T-cell (primary cell): ENCODE measurements at regions of chr1 and their contacts with region 1.

Region 1: GRCh38 chr1:212388985-212389716 is 25.5 kb downstream of the PACC1 start:
- DNase-seq: no peak
- ATAC-seq: no peak
- H3K4me3 ChIP-seq: no peak overlapping the region
- H3K4me3 Mint-ChIP-seq: no peak overlapping the region
- H3K27ac ChIP-seq: no peak overlapping the region
- H3K27ac Mint-ChIP-seq: no peak overlapping the region
- H3K4me1 ChIP-seq: peaks cover 0 to 8% of the 10 kb centered on the region in 2 experiments
- H3K4me1 Mint-ChIP-seq: peaks cover 11 to 14% (median 13%) of the 10 kb centered on the region in 3 donors
- H3K27me3 ChIP-seq: no peaks in the 10 kb centered on the region
- H3K27me3 Mint-ChIP-seq: no peaks in the 10 kb centered on the region

Region 2: DNA sequence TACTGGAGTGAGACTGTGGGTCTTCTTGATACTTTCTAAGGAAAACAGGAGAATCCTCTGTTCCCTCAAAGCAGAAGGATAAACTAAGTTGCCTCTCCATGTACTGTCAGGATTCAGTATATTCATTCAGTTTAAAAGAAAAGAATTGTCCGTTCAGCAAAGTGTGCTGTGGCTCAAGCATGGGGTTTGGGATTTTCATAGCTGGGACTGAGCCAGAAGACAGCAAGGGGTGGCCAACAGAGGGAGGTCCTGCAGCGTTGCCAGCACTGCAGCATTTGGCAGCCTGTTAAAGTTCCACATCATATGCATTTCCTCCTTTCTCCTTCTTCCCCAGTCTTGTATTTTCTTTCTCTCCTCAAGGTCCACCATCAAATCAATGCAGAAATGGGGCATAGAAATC is 278.5 kb before region 1 on chr1:
- CTCF ChIA-PET with region 1: no interaction called
- POLR2A ChIA-PET with region 1: no interaction called
- DNase-seq: no peak
- ATAC-seq: no peak
- H3K4me3 ChIP-seq: no peak overlapping the region
- H3K4me3 Mint-ChIP-seq: no peak overlapping the region
- H3K27ac ChIP-seq: no peak overlapping the region
- H3K27ac Mint-ChIP-seq: no peak overlapping the region
- H3K4me1 ChIP-seq: peaks cover 0 to 38% of the 10 kb centered on the region in 2 experiments
- H3K4me1 Mint-ChIP-seq: peaks cover 0 to 9% (median 8%) of the 10 kb centered on the region in 3 donors
- H3K27me3 ChIP-seq: no peaks in the 10 kb centered on the region
- H3K27me3 Mint-ChIP-seq: no peaks in the 10 kb centered on the region

Region 3: DNA sequence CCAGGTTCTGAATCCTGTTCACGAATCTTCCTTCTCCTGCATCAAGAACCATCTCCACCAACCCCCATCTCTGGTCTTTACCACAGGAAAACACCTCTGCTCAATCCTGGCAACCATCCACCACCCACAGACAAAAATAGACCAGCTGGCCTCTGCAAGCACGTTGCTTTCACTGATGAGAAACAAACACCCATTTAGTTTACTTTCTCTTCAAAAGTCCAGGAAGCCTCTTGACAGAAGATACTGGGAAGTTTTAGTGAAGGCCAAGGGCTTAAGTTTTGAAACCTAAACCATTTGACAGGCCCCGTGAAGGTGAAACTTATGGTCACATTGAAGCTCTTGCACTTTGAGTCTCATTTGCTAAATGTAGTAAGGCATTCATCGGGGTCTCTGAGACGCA is 226.5 kb before region 1 on chr1:
- CTCF ChIA-PET with region 1: no interaction called
- POLR2A ChIA-PET with region 1: interaction called in 1 of 2 experiments, 14 read pairs
- DNase-seq: peak in 23 of 35 experiments; percentile 2 to 44 (median 15)
- ATAC-seq: peak; percentile 25 to 61 (median 38)
- H3K4me3 ChIP-seq: no peak overlapping the region
- H3K4me3 Mint-ChIP-seq: peak overlapping the region; percentile 1 to 57 (median 2)
- H3K27ac ChIP-seq: no peak overlapping the region
- H3K27ac Mint-ChIP-seq: peak overlapping the region; percentile 6 to 7
- H3K4me1 ChIP-seq: peaks cover 22 to 26% of the 10 kb centered on the region in 2 experiments
- H3K4me1 Mint-ChIP-seq: peaks cover 22 to 33% (median 24%) of the 10 kb centered on the region in 3 donors
- H3K27me3 ChIP-seq: no peaks in the 10 kb centered on the region
- H3K27me3 Mint-ChIP-seq: no peaks in the 10 kb centered on the region